Right lobe of liver (tissue), 6 donors: ENCODE measurements at regions of chr18 and their contacts with region 1.

Region 1: DNA sequence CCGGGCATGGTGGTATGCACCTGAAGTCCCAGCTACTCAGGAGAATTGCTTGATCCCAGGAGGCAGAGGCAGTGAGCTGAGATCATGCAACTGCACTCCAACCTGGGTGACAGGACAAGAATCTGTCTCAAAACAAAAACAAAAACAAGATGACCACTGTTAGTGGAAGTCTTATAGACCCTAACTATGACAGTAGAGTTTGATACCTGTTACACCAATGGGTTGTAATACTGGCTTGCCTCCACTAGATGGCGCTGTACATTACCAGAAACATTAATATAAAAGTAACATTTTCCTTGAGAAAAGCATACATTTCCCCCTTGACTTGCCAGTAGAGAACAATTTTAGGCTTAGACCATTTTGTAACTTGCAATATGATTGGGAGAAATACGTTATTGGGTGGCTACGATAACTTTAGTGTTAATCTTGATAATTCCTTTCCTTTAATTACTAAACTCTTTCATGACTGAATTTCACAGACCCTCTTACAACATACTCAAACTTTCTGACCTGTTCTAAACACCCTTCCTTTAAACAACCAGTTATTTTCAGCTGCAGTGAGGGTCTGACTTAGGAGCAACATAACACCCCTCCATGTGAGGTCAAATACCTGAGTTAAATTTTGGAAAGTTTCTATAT is 19.5 kb downstream of the SLC25A52 start:
- DNase-seq: peak in 1 of 3 donors; percentile 54
- ATAC-seq: peak; percentile 31 to 60 (median 51)
- H3K4me3 ChIP-seq: no peak overlapping the region
- H3K27ac ChIP-seq: no peak overlapping the region
- H3K4me1 ChIP-seq: peaks cover 0 to 28% (median 4%) of the 10 kb centered on the region in 4 donors
- H3K27me3 ChIP-seq: no peaks in the 10 kb centered on the region
- CTCF ChIP-seq: peak; percentile 92 to 96 (median 94)
- POLR2A ChIP-seq: no peak

Region 2: GRCh38 chr18:31801078-31801477 is 59.9 kb after region 1 on chr18:
- intact Hi-C with region 1: loop called in 1 of 2 experiments (anchors 10 kb)
- DNase-seq: no peak
- ATAC-seq: peak; percentile 93 to 96 (median 94)
- H3K4me3 ChIP-seq: no peak overlapping the region
- H3K27ac ChIP-seq: peak overlapping the region in 2 of 3 donors; percentile 45 to 56
- H3K4me1 ChIP-seq: peaks cover 0 to 24% (median 5%) of the 10 kb centered on the region in 4 donors
- H3K27me3 ChIP-seq: no peaks in the 10 kb centered on the region
- CTCF ChIP-seq: peak in 1 of 4 donors; percentile 13
- POLR2A ChIP-seq: no peak

Region 3: DNA sequence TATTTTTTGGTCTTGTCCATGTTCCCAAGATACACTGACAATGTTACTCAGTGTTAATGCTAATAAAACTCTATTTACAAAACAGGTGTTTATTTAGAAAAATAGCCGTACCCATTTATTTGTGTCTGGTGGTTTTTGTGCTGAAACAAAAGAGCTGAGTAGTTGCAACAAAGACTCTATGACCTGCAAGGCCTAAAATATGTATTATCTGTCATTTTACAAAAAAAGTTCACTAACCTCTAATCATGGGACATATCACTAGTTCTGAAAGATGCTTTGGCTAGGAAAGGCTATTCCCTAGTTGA is 78.7 kb after region 1 on chr18:
- intact Hi-C with region 1: loop called in 1 of 2 experiments (anchors 5 kb)
- DNase-seq: no peak
- ATAC-seq: no peak
- H3K4me3 ChIP-seq: no peak overlapping the region
- H3K27ac ChIP-seq: no peak overlapping the region
- H3K4me1 ChIP-seq: no peaks in the 10 kb centered on the region
- H3K27me3 ChIP-seq: no peaks in the 10 kb centered on the region
- CTCF ChIP-seq: no peak
- POLR2A ChIP-seq: no peak

Region 4: GRCh38 chr18:31977270-31977872 is 236.2 kb after region 1 on chr18:
- intact Hi-C with region 1: loop called in 1 of 2 experiments (anchors 10 kb)
- DNase-seq: peak in 1 of 3 donors; percentile 51
- ATAC-seq: peak; percentile 78 to 92 (median 86)
- H3K4me3 ChIP-seq: no peak overlapping the region
- H3K27ac ChIP-seq: no peak overlapping the region
- H3K4me1 ChIP-seq: peaks cover 0 to under 1% (median 0%) of the 10 kb centered on the region in 4 donors
- H3K27me3 ChIP-seq: no peaks in the 10 kb centered on the region
- CTCF ChIP-seq: peak; percentile 50 to 66 (median 62)
- POLR2A ChIP-seq: no peak